ENCODE measurements at regions of chr4 and their contacts with region 1.

Region 1: DNA sequence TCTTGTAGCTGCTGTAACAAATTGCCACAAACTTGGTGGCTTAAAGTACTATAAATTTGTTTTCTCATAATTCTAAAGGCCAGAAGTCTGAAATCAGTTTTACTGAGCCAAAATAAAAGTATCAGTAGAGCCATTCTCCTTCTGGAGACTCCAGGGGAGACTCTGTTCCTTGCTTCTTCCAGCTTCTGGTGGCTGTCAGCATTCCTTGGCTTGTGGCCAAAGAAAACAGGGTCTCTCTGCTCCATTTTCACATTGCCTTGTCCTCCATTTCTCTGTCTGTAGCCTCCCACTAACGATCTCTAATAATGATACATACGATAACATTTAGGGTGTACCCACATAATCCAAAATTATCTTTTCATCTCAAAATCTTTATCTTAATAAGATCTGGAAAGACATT is 200.4 kb downstream of the MAB21L2 start:
- DNase-seq: no peak
- ATAC-seq: peak in 2 of 4 donors; percentile 36 to 38
- H3K4me3 ChIP-seq: no peak overlapping the region
- H3K27ac ChIP-seq: no peak overlapping the region
- H3K4me1 ChIP-seq: peaks cover 0 to 10% (median 2%) of the 10 kb centered on the region in 12 donors
- H3K27me3 ChIP-seq: no peaks in the 10 kb centered on the region
- CTCF ChIP-seq: no peak
- POLR2A ChIP-seq: no peak

Region 2: GRCh38 chr4:150722908-150723362 is 59.4 kb before region 1 on chr4:
- intact Hi-C with region 1: loop called in 1 of 10 experiments (anchors 5 kb)
- DNase-seq: peak; percentile 80 to 95 (median 84)
- ATAC-seq: peak; percentile 98 to 100 (median 100)
- H3K4me3 ChIP-seq: no peak overlapping the region
- H3K27ac ChIP-seq: peak overlapping the region in 11 of 12 donors; percentile 21 to 79 (median 61)
- H3K4me1 ChIP-seq: peaks cover 0 to 36% (median 12%) of the 10 kb centered on the region in 12 donors
- H3K27me3 ChIP-seq: no peaks in the 10 kb centered on the region
- CTCF ChIP-seq: peak in 11 of 12 donors; percentile 33 to 73 (median 49)
- POLR2A ChIP-seq: no peak

Region 3: DNA sequence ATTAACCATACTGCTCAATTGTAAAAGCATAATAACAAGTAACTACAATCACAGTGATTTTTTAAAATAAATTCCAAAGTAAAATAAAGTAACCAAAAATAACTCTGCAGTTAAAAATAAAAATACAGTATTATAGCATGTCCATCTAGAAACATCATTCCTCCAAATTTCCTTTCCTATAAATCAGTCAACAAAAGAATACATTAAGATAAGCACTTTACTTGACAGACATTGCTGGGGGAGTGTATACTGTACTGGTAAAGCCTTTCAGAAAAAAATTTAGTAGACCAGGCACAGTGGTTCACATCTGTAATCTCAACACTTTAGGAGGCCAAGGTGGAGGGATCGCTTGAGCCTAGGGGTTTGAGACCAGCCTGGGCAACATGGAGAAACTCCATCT is 141.6 kb after region 1 on chr4:
- intact Hi-C with region 1: no loop called
- DNase-seq: no peak
- ATAC-seq: no peak
- H3K4me3 ChIP-seq: no peak overlapping the region
- H3K27ac ChIP-seq: no peak overlapping the region
- H3K4me1 ChIP-seq: no peaks in the 10 kb centered on the region
- H3K27me3 ChIP-seq: no peaks in the 10 kb centered on the region
- CTCF ChIP-seq: no peak
- POLR2A ChIP-seq: no peak

Measured in heart left ventricle (tissue), 16 donors.